ENCODE measurements at regions of chr5 and their contacts with region 1.

Region 1: DNA sequence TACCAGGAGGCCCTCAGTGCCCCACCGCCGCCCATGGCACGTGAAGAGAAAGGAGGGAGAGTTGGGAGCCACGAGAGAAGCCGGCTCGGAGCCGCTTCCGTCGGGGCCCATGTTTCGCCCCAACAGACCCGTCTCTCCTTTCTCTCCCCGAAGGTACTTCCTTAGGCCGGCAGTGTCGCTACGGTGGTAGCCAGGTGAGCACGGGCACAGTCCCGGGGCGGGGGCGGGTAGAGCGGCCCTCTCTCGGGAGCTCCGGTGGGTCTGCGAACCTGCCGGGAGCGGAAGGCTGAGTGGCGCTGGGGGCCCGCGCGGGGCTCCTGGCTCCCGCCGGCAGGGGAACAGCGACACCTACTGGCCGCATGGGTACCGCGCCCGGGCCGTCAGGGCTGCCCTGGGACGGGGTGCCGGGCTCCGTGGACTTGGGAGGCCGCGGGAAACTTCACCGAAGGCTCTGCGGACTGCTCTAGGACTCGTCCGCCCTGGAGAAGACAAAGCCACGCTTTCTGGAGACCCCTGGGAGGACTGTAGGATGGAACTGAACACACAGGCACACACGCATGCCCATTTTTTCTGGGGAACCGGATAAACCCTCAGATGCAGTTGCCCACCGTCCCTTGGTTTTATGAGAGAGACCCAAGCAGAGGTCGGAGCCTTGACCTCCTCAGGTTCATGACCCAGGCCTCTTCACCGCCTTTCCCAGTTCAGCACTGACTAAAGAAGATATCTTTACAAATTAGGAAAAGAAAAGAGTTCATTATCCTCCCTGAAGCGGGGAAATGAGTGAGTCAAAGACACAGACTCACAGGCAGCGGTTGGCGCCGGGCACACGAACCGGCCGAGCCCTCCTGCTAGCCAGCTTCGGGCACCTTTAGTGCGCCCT is 202.5 kb downstream of the MEF2C start:
- DNase-seq: peak; percentile 87

Region 2: DNA sequence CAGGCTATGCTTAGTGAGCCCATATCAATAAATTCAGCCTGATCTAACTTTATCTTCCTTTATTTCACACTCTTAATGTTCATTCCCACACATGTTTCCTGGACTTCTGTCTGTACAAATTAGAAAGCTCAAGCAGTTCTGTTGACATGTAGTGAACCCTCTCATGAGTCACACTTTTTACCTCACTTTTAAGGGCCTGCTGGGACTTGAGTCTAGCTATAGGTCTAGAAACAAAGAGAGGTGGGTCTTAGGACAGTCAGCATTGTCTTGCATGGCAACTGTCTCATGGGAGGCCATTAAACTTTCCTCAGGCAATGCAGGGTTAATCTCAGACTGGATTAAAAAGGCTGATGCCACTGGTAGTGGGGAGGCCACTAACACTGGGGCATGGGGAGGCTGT is 1259.2 kb before region 1 on chr5:
- intact Hi-C with region 1: loop called (anchors 10 kb)
- DNase-seq: no peak

Region 3: GRCh38 chr5:88720289-88720688 is 39.8 kb after region 1 on chr5:
- intact Hi-C with region 1: no loop called
- DNase-seq: no peak

Region 4: DNA sequence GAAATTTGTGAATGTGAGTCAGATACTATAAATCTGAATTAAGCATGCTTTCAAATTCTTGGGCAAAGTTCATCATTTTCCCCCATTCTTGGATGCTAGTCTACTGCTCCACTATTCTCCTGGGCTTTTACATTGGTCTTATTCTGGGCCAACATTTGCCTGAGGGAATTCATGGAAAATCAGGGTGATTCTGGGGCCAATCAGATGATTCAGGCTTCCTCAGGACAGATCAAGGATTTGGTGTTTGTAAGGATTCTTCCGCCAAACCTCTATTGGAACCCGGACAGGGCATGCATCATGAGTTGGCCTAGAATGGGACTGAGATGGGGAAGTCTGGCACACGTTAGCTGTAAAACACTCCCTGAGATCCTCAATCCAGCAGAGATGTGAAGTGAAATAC is 88.7 kb after region 1 on chr5:
- intact Hi-C with region 1: no loop called
- DNase-seq: no peak

Region 5: GRCh38 chr5:88956416-88957412 is 276.2 kb after region 1 on chr5:
- intact Hi-C with region 1: no loop called
- DNase-seq: no peak

Measured in cardiac septum (tissue), 1 donor.